Psoas muscle (tissue), 8 donors: ENCODE measurements at regions of chr10 and their contacts with region 1.

Region 1: DNA sequence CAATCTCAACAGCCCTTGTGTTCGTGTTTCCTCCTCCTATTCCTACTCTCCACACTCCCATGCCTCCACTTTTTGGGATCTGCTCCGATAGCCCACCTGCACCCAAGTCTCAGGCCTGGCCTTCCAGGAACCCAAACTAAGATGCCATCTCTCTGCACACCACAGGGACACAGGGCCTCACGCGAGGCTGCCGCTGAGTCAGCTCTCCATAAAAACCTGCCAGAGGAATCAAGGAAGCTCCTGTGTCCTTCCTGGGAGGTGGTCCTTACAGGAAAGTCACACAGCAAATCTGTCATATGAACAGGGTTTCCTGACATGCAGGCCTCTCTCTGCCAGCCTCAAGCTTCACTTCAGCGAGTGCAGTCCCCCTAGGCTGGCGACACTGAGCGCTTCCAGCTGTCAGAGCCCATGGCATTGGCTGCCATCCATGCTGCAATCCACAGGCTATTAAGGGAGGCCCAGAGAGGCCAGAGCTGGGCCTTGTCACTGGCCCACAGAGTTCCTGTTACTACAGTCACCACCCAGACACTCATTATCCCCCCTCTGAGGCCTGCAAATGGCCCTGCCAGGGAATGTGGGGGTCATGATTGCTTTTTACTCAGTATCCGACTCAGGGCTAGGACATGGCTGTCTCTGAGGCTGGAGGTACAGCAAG is 151.4 kb downstream of the OAT start:
- DNase-seq: peak in 1 of 2 donors; percentile 46
- ATAC-seq: peak; percentile 62 to 86 (median 73)
- H3K4me3 ChIP-seq: no peak overlapping the region
- H3K27ac ChIP-seq: no peak overlapping the region
- H3K4me1 ChIP-seq: no peaks in the 10 kb centered on the region
- H3K27me3 ChIP-seq: no peaks in the 10 kb centered on the region
- CTCF ChIP-seq: no peak

Region 2: DNA sequence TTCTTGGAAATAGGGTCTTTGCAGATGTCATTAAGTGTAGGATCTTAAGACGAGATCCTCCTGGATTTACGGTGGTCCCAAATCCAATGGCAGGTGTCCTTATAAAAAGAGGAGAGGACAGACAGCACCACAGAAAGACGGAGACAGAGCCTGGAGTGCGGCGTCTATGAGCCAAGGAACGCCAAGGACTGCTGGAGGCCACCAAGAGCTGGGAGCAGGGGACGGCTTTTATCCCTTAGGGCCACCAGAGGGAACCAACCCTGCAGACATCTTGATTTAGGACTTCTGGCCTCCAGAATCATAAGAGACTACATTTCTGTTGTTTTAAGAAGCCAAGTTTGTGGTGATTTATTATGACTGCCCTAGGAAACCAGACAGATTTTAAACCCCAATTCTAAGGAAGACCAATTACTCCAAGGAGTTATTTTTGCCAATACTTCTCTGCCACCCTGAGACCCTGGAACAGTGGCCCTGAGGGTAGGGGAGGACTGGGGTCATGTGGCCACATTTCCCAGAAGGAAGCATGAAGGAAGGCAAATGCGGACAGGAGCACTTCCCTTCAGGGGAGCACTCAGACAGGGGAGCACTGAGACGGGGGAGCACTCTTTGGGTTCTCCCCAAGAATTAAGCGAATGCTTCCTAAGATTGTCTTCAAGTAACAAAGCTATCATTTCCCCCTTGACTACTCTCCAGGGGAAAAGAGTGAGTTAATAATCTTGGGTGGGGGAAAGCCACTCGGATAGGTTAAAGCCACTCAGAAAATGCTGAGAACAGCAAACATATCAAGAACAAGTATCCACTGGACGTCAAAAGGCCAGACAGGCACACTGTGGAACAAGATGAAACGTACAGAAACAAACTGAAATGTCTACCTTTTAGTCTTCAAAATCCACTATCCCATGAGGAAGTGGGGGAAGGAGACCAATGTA is 241.4 kb before region 1 on chr10:
- intact Hi-C with region 1: loop called in 1 of 2 experiments (anchors 10 kb)
- DNase-seq: no peak
- ATAC-seq: peak in 3 of 4 donors; percentile 66 to 85 (median 77)
- H3K4me3 ChIP-seq: no peak overlapping the region
- H3K27ac ChIP-seq: no peak overlapping the region
- H3K4me1 ChIP-seq: no peaks in the 10 kb centered on the region
- H3K27me3 ChIP-seq: no peaks in the 10 kb centered on the region
- CTCF ChIP-seq: peak; percentile 48

Region 3: DNA sequence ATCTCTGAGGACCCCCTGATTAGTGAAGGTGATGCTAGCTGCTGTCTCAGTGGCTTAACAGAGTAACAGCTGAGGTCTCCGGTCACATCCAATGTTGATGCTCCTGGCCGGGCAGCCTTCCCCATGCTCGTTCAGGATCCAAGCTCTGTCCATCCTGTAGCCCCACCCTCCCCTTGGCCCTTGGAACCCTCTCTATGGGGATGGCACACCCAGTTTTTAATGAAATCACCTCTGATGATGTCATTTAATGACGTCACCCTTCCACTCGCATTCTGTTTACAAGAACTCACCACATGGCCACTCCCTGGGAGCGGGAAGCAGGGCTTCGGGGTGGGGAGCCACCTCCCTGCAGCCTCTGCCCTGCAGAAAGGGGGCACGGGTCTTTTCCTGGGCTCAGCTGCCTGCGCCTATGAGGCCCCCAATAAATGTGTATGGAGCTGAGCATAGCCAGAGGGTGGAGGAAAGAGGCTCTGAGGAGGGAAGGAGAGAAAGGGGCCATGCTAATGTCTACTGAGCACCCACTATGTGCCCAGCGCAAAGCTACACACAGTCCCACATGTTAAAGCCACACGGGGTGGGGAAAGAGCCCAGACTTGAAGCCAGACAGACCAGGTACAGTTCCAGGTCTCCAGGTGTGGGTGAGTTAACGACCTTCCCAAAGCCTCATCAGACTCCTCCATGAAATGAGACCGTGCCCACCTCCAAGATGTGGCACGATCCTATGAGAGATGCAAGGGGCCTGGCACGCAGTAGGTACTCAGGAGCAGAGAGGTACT is 55.9 kb after region 1 on chr10:
- intact Hi-C with region 1: no loop called
- DNase-seq: no peak
- ATAC-seq: no peak
- H3K4me3 ChIP-seq: no peak overlapping the region
- H3K27ac ChIP-seq: no peak overlapping the region
- H3K4me1 ChIP-seq: no peaks in the 10 kb centered on the region
- H3K27me3 ChIP-seq: peaks cover 0 to 2% (median 0%) of the 10 kb centered on the region in 3 donors
- CTCF ChIP-seq: no peak